Activated B cell treated with CpG ODN at 0.5 μM for 24 hours (primary cell): ENCODE measurements at regions of chr1 and their contacts with region 1.

Region 1: GRCh38 chr1:186375088-186375953 is at the starts of genes ODR4 and TPR:
- DNase-seq: peak; percentile 93
- ATAC-seq: peak; percentile 82
- H3K4me3 Mint-ChIP-seq: peak within 1 kb of the TSS; percentile 92
- H3K27ac Mint-ChIP-seq: peak within 1 kb of the TSS; percentile 92
- H3K4me1 Mint-ChIP-seq: peaks cover 31% of the 10 kb centered on the region
- H3K27me3 Mint-ChIP-seq: no peaks in the 10 kb centered on the region
- CTCF ChIP-seq: peak; percentile 53
- total RNA-seq, gene ODR4: 11.9 and 15.6 TPM in 2 replicates
- total RNA-seq, gene TPR: 112 and 125 TPM in 2 replicates

Region 2: DNA sequence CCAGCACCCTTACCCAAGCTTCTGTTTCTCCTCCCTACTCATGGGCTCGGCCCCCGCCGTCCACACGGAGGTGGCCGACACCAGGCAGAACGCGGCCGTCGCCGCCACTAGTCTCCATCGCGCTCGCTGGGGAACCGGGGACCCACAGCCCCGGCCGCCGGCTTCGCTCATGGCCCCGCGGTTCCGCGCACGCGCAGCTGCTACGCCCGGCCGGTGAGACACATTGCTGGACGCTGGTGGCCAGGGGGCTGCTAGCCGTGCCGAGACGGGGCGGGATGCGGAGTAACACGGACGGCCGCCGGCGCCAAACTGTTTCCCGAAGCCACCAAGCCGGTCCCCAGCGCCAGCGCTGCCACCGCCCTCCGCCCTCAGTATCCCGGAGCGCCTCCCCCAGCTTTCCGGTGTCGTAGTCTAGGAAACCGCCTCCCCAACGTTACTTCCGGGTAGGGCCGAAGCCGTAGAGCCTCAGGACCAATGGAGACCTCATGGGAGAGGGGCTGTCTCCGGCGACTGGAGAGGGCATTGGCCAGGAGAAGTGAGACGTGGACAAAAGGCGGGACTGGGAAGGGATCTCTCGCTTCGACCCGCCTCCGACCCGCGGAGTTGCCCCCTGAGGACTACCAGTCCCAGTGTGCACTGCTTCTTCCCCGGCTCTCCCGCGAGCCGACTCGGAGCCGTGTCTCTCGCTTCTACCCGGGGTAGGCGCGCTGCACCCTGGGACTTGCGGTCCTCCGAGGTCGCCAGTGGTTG is 1620.7 kb before region 1 on chr1 and contains the start of gene EDEM3:
- CTCF ChIA-PET with region 1: no interaction called
- POLR2A ChIA-PET with region 1: interaction called, 4 read pairs
- intact Hi-C with region 1: loop called (anchors 1 kb)
- DNase-seq: peak; percentile 90
- ATAC-seq: peak; percentile 95
- H3K4me3 Mint-ChIP-seq: peak within 1 kb of the TSS; percentile 95
- H3K27ac Mint-ChIP-seq: peak within 1 kb of the TSS; percentile 86
- H3K4me1 Mint-ChIP-seq: peaks cover 23% of the 10 kb centered on the region
- H3K27me3 Mint-ChIP-seq: peaks cover under 1% of the 10 kb centered on the region
- CTCF ChIP-seq: no peak
- total RNA-seq, gene EDEM3: 11.5 and 16.2 TPM in 2 replicates

Region 3: GRCh38 chr1:186337554-186337953 is 37.8 kb before region 1 on chr1:
- CTCF ChIA-PET with region 1: no interaction called
- POLR2A ChIA-PET with region 1: no interaction called
- intact Hi-C with region 1: loop called (anchors 5 kb)
- DNase-seq: no peak
- ATAC-seq: no peak
- H3K4me3 Mint-ChIP-seq: no peak overlapping the region
- H3K27ac Mint-ChIP-seq: no peak overlapping the region
- H3K4me1 Mint-ChIP-seq: no peaks in the 10 kb centered on the region
- H3K27me3 Mint-ChIP-seq: no peaks in the 10 kb centered on the region
- CTCF ChIP-seq: no peak